ENCODE measurements at regions of chr19 and their contacts with region 1.

Region 1: DNA sequence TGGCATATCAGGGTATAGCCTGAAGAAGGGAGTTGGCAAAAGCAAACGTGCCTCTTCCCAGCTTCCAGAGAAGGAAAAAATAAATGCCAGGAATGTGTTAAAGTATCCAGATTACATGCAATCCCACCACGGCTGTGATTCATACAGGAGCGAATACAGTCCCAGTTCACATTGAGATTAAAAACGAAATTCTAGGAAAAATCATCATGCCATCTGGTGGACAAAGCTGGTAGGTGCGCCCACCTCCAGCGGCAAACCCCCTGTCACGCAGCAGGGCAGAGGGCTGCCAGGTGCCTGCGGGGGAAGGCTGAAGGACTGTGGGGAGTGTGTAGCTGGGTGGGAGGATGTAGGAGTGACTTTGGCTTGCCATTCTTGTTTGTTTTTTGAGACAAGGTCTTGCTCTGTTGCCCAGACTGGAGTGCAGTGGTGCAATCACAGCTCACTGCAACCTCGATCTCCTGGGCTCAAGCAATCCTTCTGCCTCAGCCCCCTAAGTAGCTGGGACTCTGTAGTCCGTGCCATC is 6.4 kb upstream of the DMWD start:
- DNase-seq: peak; percentile 65 to 77 (median 77)
- H3K4me3 ChIP-seq: no peak overlapping the region
- H3K27ac ChIP-seq: no peak overlapping the region
- H3K4me1 ChIP-seq: peaks cover 0 to 9% (median 1%) of the 10 kb centered on the region in 4 experiments
- H3K27me3 ChIP-seq: peaks cover 0 to 50% (median 15%) of the 10 kb centered on the region in 5 experiments

Region 2: GRCh38 chr19:45770192-45771101 is 28.6 kb before region 1 on chr19:
- CTCF ChIA-PET with region 1: interaction called, 138 read pairs
- POLR2A ChIA-PET with region 1: interaction called, 13 read pairs
- DNase-seq: peak; percentile 95 to 97 (median 97)
- H3K4me3 ChIP-seq: peak overlapping the region in 5 of 7 experiments; percentile 57 to 85 (median 74)
- H3K27ac ChIP-seq: peak overlapping the region in 1 of 2 experiments; percentile 64
- H3K4me1 ChIP-seq: peaks cover 0 to 39% (median 33%) of the 10 kb centered on the region in 4 experiments
- H3K27me3 ChIP-seq: peaks cover 0 to 66% (median 23%) of the 10 kb centered on the region in 5 experiments

Region 3: GRCh38 chr19:45809643-45810159 is 10.6 kb after region 1 on chr19:
- CTCF ChIA-PET with region 1: interaction called, 52 read pairs
- POLR2A ChIA-PET with region 1: interaction called, 4 read pairs
- DNase-seq: peak; percentile 89 to 97 (median 95)
- H3K4me3 ChIP-seq: peak overlapping the region in 4 of 7 experiments; percentile 23 to 61 (median 46)
- H3K27ac ChIP-seq: peak overlapping the region in 1 of 2 experiments; percentile 81
- H3K4me1 ChIP-seq: peaks cover 4 to 25% (median 22%) of the 10 kb centered on the region in 4 experiments
- H3K27me3 ChIP-seq: peaks cover 0 to 2% (median 0%) of the 10 kb centered on the region in 5 experiments

Region 4: DNA sequence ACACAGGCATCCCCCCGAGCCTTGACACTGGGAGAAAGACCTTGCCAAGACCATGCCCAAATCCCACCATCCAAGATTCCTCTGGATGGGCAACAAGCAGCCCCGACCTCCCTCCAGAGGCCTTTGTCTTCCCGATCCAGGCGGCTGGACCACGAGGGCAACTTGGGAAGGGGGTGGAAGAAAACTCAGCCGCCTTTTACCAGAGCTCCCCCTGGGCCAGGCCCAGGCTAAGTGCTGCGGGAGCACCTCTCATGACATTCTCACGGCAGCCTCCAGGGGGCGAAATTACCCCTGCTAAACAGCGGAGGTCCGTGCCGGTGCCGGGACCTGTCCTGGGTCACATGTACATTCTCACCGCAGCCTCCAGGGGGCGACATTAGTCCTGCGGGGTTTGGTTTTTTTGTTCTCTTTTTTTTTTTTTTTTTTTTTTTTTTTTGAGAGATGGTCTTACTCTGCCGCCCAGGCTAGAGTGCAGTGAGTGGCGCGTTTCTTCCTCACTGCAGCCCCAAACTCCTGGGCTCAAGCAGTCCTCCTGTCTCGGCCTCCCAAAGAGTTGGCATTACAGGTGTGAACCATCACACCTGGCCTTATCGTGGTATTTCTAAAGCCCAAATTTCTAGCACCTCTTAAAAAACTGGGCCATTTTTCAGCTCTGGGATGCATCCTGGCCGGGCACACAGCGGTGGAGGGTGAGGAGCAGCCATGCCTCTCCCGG is 18.1 kb after region 1 on chr19:
- CTCF ChIA-PET with region 1: interaction called, 52 read pairs
- POLR2A ChIA-PET with region 1: interaction called, 4 read pairs
- DNase-seq: peak; percentile 96 to 98 (median 96)
- H3K4me3 ChIP-seq: no peak overlapping the region
- H3K27ac ChIP-seq: no peak overlapping the region
- H3K4me1 ChIP-seq: peaks cover 0 to 26% (median 25%) of the 10 kb centered on the region in 4 experiments
- H3K27me3 ChIP-seq: no peaks in the 10 kb centered on the region

Region 5: DNA sequence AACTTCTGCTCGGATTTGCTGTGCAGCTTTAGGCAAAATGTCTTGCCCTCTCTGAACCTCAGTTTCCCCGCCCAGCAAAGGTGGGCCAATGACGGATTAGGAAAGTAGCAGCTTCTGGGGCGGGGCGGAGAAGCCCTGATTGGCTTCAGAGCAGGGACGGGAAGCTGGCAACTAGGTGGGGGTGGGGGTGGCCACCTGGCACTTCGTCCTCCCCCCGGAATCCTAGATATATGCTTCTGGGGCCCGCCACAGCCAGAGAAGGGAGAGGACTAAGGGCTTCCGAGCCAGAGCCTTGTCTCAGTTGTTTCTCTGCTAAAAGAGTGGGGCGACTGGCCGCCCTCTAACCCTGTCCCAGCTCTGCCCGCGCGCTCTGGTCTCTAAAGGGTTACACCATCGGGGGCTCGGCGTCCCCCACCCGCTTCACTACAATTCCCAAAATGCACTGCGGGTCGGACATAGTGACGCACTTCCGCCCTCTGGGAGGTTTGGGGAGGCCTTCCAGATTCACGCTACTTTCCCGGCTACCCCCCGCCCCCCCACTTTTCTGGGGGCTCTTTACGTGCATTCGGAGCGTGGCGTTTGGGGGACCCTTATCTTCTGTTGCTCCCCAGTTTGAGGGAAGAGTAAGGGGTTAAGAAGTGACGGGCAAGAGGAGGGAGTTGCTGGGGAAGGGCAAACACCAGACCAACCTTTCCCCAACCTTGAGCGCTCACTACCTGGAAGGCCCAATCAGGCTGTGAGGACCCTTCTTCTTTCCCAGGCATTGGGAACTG is 87.6 kb after region 1 on chr19:
- CTCF ChIA-PET with region 1: no interaction called
- POLR2A ChIA-PET with region 1: no interaction called
- DNase-seq: peak; percentile 93 to 94 (median 94)
- H3K4me3 ChIP-seq: peak overlapping the region; percentile 54 to 89 (median 80)
- H3K27ac ChIP-seq: peak overlapping the region; percentile 87 to 96
- H3K4me1 ChIP-seq: peaks cover 0 to 44% (median 40%) of the 10 kb centered on the region in 4 experiments
- H3K27me3 ChIP-seq: no peaks in the 10 kb centered on the region